GM12878 (cell line): ENCODE measurements at regions of chr11 and their contacts with region 1.

Region 1: DNA sequence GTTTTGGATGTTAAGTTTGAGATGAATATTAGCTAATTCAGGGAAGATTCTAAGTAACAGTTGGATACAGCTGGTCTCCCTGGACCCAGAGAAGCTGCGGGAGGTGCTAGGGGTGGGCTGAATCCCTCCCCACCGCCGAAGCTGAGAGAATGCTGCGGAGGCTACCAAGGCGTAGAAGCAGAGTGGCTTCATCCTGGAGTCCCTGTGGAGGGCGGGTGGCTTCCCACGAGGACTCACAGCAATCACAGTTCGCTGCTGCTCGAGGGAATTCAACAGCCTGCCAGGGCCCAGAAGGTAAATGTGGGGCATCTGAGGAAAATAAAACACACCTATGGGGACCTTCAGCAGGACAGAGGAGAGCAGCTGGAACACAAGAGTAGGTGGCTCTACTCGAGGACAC is 11.1 kb upstream of the B3GAT1 start:
- DNase-seq: no peak
- ATAC-seq: no peak
- H3K4me3 ChIP-seq: no peak overlapping the region
- H3K27ac ChIP-seq: no peak overlapping the region
- H3K4me1 ChIP-seq: no peaks in the 10 kb centered on the region
- H3K27me3 ChIP-seq: no peaks in the 10 kb centered on the region; a peak in 2 of 4 replicates
- CTCF ChIP-seq: no peak
- EP300 ChIP-seq: no peak
- POLR2A ChIP-seq: no peak
- RAD21 ChIP-seq: no peak

Region 2: DNA sequence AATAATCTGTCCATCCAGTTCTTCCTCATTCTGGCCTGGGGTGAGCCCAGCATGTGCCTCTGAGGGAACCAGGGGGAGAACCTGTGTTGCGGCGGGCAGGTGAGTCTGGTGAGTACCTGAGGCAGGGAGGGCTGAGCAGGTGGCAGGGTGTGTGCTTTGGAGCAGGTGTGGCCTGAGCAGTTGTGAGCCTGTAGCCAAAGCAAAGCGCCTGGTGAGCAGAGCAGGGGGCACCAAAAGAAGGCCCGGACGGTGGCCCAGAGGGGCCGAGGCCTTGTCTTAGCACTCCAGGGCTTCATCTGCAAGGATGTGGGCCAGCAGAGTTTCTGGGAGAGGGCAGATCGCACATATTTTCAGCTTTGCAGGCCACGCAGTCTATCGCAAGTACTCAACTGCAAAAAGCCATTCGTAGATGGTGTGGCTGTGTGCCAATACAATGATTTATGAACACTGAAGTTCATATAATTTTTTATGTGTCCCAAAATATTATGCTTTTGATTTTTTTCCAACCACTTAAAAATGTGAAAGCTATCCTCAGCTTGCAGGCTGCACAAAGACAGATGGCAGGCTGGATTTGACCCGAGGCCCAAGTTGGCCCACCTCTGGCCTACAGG is 82.6 kb before region 1 on chr11:
- CTCF ChIA-PET with region 1: no interaction called
- POLR2A ChIA-PET with region 1: no interaction called
- RAD21 ChIA-PET with region 1: no interaction called
- SMC1A ChIA-PET with region 1: no interaction called
- in situ Hi-C with region 1: no loop called
- intact Hi-C with region 1: no loop called
- DNase-seq: no peak
- ATAC-seq: no peak
- H3K4me3 ChIP-seq: no peak overlapping the region
- H3K27ac ChIP-seq: no peak overlapping the region
- H3K4me1 ChIP-seq: no peaks in the 10 kb centered on the region
- H3K27me3 ChIP-seq: no peaks in the 10 kb centered on the region; a peak in 2 of 4 replicates
- CTCF ChIP-seq: no peak
- EP300 ChIP-seq: no peak
- POLR2A ChIP-seq: no peak
- RAD21 ChIP-seq: no peak

Region 3: DNA sequence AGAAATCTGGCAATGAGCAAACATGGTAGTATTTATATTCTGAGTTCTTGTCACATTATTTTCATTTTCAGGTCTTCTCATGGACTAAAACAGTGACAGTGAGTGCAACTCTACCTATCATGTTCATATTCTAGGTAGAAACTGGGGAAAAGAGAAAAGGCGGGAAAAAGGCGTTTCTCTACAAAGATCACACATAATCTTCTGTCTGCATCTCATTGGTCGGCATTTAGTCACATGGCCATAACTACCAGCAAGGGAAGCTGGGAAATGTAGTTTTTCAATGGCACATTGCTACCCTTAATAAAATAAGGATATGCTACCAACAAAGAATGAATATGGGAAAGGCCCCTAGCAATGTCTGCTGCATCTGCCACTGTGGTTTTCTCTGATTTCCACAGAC is 46.5 kb after region 1 on chr11:
- CTCF ChIA-PET with region 1: no interaction called
- POLR2A ChIA-PET with region 1: no interaction called
- RAD21 ChIA-PET with region 1: no interaction called
- SMC1A ChIA-PET with region 1: no interaction called
- in situ Hi-C with region 1: no loop called
- intact Hi-C with region 1: loop called (anchors 5 kb)
- DNase-seq: no peak
- ATAC-seq: no peak
- H3K4me3 ChIP-seq: no peak overlapping the region
- H3K27ac ChIP-seq: no peak overlapping the region
- H3K4me1 ChIP-seq: no peaks in the 10 kb centered on the region
- H3K27me3 ChIP-seq: peaks cover 2 to 3% of the 10 kb centered on the region in 2 experiments; a peak in 2 of 4 replicates
- CTCF ChIP-seq: no peak
- EP300 ChIP-seq: no peak
- POLR2A ChIP-seq: no peak
- RAD21 ChIP-seq: no peak